ENCODE measurements at regions of chr20 and their contacts with region 1.

Region 1: DNA sequence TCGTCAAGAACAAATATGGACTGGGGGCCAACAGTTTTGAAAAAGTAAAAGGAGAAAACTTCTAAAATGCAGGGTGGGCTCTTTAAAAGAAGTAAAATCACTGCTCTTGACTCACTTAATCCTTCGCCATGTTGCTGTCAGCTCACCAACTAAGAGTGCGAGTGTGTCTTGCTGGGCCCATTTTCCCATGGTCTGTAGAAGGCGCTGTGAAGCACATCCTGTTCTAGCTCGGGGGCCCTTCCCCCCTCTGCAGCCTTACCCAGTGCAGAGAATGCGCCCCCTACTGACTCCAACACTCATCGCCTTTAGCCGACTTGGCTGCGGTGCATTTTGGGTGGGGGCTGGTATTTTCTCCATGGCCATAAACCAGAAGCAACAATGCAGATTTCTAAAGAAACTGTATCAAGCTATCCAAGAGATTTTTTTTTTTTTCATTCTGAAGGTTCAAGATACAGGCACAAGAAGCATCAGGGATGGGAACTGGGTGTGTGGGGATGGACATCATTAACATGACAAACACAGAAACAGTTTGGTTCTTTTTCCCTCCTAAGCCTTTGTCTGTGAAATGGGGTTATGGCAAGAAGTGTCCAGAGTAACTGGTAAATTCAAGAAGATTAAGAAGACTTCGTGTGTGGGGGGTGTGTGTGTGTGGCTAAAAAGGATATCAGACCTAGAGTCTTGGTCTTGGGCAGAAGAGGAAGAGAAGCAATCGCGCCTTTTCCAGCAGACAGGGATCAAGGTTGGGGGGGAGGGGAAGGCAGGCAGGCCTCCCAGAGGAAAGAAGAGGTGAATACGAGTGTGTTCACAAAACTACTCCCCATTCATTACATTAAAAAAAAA is 1.7 kb downstream of the ADNP start:
- DNase-seq: peak; percentile 84
- CTCF ChIP-seq: peak; percentile 95

Region 2: GRCh38 chr20:50815162-50815989 is 114.1 kb before region 1 on chr20:
- CTCF ChIA-PET with region 1: interaction called, 13 read pairs
- POLR2A ChIA-PET with region 1: interaction called, 10 read pairs
- DNase-seq: peak; percentile 44
- CTCF ChIP-seq: no peak

Region 3: DNA sequence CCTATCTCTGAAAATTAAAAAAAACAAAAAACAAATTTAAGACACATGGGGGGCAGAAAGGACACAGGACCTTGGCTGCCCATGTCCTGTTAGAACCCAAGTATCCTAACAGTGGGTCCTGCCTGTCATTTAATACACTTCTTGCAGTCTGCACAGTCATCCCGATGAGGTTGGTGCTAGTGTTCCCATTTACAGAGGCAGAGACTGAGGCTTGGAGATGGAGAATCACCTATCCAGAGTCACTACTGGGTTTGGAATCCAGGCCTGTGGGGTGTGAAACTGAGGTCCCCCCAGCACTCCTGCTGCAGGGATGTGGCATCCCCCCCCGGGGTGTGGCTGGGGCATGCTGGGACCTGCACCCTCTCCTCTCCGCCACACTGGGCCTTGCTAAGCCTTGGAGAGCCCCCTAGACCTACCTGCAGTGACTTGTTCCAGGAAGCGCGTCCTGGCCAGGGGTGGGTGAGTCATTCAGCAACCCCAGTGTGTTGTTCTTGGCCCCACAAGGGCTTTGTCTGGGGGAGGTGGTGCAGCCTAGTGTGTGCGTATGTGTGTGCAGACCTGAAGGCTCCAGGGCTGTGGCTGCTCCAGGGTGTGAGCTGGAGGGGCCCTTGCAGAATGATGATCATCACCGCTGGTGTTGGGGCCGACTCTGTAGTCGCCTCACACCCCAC is 85.0 kb before region 1 on chr20:
- CTCF ChIA-PET with region 1: interaction called, 11 read pairs
- POLR2A ChIA-PET with region 1: no interaction called
- DNase-seq: peak; percentile 91
- CTCF ChIP-seq: no peak

Region 4: DNA sequence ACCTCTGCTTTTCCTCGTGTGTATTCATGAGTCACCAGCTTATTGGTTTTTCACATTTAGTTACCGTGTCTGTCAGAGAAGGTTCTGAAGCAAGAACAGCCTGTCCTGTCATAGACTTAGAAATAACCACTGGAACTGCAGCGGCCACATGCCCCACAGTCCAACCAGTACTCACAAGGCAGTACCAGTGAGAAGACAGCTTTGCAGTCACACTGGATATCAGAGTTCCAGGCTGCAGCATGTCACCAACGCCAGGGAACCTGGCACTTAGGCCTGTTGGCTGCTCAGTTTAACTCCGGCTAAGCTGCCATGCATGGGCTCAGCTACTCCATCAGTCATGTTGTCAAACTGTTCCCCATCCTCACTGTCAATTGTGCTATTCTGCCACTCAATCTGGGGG is 38.4 kb before region 1 on chr20:
- CTCF ChIA-PET with region 1: interaction called, 14 read pairs
- POLR2A ChIA-PET with region 1: no interaction called
- DNase-seq: no peak
- CTCF ChIP-seq: no peak

Region 5: DNA sequence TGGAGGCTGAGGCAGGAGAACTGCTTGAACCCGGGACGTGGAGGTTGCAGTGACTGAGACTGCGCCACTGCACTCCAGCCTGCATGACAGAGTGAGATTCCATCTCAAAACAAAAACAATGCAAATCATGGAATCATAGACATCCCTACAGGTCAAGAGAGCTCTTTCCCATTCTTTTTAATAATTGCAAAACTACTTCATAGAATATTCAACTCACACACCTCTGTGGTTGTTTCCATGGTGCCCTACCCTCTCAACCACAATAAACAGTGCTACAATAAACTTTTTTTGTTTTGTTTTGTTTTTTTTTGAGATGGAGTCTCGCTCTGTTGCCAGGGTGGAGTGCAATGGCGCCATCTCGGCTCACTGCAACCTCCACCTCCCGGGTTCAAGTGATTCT is 13.6 kb after region 1 on chr20:
- CTCF ChIA-PET with region 1: interaction called, 13 read pairs
- POLR2A ChIA-PET with region 1: interaction called, 5 read pairs
- DNase-seq: no peak
- CTCF ChIP-seq: no peak

Region 6: DNA sequence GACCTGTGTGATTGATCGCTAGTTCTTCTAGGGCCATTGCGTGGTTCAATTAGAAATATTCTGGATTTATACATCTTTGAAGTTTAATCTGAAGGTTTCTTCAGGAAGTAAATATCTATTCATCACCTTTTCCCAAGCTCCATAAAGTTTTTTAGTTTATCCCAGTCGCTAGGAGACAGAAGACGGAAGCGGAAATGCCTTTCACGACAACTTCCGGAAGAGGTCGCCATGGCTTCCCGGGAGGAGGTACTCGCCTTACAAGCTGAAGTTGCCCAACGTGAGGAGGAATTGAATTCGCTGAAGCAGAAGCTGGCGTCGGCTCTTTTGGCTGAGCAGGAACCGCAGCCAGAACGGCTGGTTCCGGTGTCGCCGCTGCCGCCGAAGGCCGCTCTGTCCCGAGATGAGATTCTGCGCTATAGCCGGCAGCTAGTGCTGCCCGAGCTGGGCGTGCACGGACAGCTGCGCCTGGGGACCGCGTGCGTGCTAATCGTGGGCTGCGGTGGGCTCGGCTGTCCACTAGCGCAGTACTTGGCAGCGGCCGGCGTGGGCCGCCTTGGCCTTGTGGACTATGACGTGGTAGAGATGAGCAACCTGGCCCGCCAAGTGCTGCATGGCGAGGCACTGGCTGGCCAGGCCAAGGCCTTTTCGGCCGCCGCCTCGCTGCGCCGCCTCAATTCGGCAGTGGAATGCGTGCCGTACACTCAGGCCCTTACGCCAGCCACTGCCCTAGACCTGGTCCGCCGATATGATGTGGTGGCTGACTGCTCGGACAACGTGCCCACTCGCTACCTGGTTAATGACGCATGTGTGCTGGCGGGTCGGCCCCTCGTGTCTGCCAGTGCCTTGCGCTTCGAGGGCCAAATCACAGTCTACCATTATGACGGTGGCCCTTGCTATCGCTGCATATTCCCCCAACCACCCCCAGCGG is 29.4 kb after region 1 on chr20 and contains the start of gene MOCS3:
- CTCF ChIA-PET with region 1: interaction called, 14 read pairs
- POLR2A ChIA-PET with region 1: interaction called, 27 read pairs
- DNase-seq: peak; percentile 90
- CTCF ChIP-seq: peak; percentile 9

Region 7: DNA sequence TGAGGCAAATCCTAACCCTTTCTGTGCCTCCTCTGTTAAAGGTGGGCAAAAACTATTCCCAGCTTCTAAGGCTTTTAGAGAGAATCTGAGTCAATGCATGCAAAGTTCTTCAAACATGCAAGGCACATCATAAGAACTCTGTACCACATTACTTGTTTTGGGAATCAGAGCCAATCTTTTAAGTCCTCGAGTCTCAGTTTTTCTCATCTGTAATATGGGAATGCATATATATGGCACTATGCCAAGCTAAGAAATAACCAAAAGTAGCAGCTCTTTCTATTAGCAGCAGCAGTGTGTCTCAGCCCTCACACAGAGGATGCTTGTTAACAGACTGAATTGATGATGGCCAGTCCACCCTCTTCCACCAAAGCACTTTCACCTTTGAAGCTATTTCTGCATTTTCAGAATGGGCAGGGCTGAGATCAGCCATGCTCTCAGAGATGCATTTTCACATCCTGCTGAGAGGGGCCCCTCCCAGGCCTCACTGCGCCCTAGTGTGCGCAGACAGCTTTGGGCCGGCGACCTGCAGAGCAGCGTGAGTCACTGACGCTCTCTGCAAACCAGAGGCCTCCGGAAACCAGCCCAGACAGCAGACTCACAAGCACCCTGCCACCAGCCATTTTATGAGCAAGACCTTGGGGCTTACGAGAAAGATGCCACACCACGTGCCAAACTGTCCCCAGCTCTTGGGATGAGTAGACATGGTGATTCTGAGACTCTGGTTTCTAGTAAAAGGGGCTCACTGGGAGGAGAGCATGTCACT is 475.0 kb after region 1 on chr20:
- CTCF ChIA-PET with region 1: no interaction called
- POLR2A ChIA-PET with region 1: no interaction called
- DNase-seq: peak; percentile 89
- CTCF ChIP-seq: no peak

Measured in GM10248 (cell line).